Right cardiac atrium (tissue), 5 donors: ENCODE measurements at regions of chr4 and their contacts with region 1.

Region 1: GRCh38 chr4:123418351-123418931 is 21.8 kb downstream of the SPRY1 start:
- DNase-seq: no peak
- ATAC-seq: peak; percentile 79
- H3K4me3 ChIP-seq: no peak overlapping the region
- H3K27ac ChIP-seq: no peak overlapping the region
- H3K4me1 ChIP-seq: no peaks in the 10 kb centered on the region
- H3K27me3 ChIP-seq: no peaks in the 10 kb centered on the region

Region 2: GRCh38 chr4:123361195-123361861 is 57.1 kb before region 1 on chr4:
- intact Hi-C with region 1: no loop called
- DNase-seq: peak in 1 of 3 donors; percentile 49
- ATAC-seq: peak; percentile 70 to 88
- H3K4me3 ChIP-seq: no peak overlapping the region
- H3K27ac ChIP-seq: no peak overlapping the region
- H3K4me1 ChIP-seq: peaks cover 4% of the 10 kb centered on the region
- H3K27me3 ChIP-seq: no peaks in the 10 kb centered on the region

Region 3: DNA sequence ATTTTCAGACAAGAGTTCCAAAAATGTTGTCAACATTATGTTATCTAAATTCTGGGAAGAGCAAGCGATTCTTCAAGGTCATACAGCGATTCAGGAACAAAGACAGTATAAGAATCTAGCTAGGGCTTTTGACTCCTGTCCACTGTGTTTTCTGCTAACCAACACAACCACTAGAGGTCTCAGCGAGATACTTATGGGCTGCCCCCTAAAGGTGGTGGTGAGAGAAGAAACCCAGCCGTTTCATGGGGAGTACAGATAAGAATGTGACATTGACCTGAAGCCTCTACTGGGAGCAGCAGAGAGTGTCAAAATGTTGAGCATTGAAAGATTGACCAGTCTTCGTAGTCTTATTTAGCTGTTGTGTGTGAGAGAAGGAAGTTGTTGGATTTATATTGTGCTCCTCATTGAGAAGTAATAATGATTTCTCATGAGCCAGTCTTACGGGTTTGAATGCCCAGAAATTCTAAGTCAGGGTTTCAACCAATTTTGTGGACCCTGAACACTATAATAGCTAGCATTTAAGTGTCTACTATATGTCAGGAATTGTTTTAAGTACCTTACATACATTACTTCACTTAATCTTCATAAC is 146.4 kb after region 1 on chr4:
- intact Hi-C with region 1: loop called in 1 of 4 experiments (anchors 10 kb)
- DNase-seq: peak in 2 of 3 donors; percentile 41 to 50
- ATAC-seq: peak; percentile 89
- H3K4me3 ChIP-seq: no peak overlapping the region
- H3K27ac ChIP-seq: no peak overlapping the region
- H3K4me1 ChIP-seq: peaks cover 1% of the 10 kb centered on the region
- H3K27me3 ChIP-seq: no peaks in the 10 kb centered on the region